ENCODE measurements at regions of chr7 and their contacts with region 1.

Region 1: GRCh38 chr7:30659312-30659711 is 22.9 kb downstream of the CRHR2 start:
- DNase-seq: no peak
- H3K4me3 ChIP-seq: no peak overlapping the region
- H3K27ac ChIP-seq: no peak overlapping the region
- H3K4me1 ChIP-seq: no peaks in the 10 kb centered on the region; a peak in 1 of 7 replicates
- H3K27me3 ChIP-seq: no peaks in the 10 kb centered on the region; a peak in 1 of 7 replicates
- CTCF ChIP-seq: no peak
- EP300 ChIP-seq: no peak
- POLR2A ChIP-seq: no peak
- RAD21 ChIP-seq: no peak

Region 2: DNA sequence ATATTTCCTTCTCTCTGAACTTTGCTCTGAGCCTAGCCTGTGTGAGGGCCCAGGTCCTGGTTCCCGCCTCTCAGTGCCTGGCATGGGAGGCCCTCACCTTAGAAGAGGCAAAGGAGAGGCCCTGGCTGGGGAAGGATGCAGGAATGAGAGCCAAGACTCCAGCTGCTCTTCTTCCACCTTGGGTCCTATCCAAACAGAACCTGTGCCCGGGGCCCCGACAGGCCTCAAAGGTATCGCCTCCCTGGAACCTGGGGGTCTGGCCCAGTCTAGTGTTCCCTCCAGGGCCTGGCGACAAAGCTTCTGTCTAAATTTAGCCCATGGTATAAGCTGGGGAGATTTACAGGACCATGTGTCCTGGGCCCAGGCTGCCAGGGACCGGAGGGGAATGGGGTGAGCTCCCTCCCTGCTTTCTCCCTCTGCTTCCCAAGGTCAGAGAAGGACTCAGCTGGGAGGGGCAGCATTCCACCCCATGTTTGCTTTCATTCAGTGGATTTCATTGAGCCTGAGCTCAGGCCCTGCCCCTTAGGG is 35.0 kb after region 1 on chr7:
- CTCF ChIA-PET with region 1: interaction called, 14 read pairs
- POLR2A ChIA-PET with region 1: interaction called, 3 read pairs
- DNase-seq: no peak
- H3K4me3 ChIP-seq: no peak overlapping the region
- H3K27ac ChIP-seq: no peak overlapping the region
- H3K4me1 ChIP-seq: peaks cover 0 to 13% (median 2%) of the 10 kb centered on the region in 4 experiments; a peak in 2 of 7 replicates
- H3K27me3 ChIP-seq: no peaks in the 10 kb centered on the region
- CTCF ChIP-seq: no peak
- EP300 ChIP-seq: no peak
- POLR2A ChIP-seq: no peak
- RAD21 ChIP-seq: no peak

Region 3: GRCh38 chr7:30755384-30756154 is 96.3 kb after region 1 on chr7:
- CTCF ChIA-PET with region 1: no interaction called
- POLR2A ChIA-PET with region 1: no interaction called
- DNase-seq: no peak
- H3K4me3 ChIP-seq: no peak overlapping the region
- H3K27ac ChIP-seq: no peak overlapping the region
- H3K4me1 ChIP-seq: no peaks in the 10 kb centered on the region; a peak in 1 of 7 replicates
- H3K27me3 ChIP-seq: no peaks in the 10 kb centered on the region; a peak in 1 of 7 replicates
- CTCF ChIP-seq: peak in 2 of 3 experiments; percentile 26 to 42; a peak in 2 of 4 replicates
- EP300 ChIP-seq: no peak
- POLR2A ChIP-seq: no peak
- RAD21 ChIP-seq: no peak